ENCODE measurements at regions of chr19 and their contacts with region 1.

Region 1: GRCh38 chr19:41439441-41440222 is at the start of gene DMAC2:
- DNase-seq: peak; percentile 98
- ATAC-seq: peak; percentile 98
- total RNA-seq, gene DMAC2: 108 TPM

Region 2: DNA sequence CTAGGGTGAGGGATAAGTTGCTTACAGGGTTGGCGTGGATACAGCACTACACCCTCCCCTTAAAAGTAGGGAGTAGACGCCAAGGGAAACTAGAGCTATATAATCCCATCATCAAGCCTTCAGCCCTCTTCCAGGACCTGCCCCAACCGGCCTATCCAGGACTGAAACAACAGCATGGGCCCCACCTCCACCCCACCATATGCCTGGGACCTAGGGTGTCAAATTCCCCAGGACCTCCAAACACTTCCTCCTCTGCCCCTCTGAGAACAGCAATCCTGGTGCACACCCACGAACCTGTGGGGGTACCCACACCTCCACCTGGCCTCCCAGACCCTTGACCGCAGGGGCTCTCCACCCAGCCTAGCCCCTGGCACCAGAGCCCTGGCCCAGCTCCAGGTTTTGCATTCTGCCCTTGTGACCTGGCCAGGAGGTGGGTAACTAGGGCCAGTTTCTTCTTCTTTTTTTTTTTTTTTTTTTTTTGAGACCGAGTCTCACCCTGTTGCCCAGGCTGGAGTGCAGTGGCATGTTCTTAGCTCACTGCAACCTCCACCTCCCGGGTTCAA is 326.8 kb before region 1 on chr19:
- intact Hi-C with region 1: no loop called
- DNase-seq: no peak
- ATAC-seq: no peak

Region 3: DNA sequence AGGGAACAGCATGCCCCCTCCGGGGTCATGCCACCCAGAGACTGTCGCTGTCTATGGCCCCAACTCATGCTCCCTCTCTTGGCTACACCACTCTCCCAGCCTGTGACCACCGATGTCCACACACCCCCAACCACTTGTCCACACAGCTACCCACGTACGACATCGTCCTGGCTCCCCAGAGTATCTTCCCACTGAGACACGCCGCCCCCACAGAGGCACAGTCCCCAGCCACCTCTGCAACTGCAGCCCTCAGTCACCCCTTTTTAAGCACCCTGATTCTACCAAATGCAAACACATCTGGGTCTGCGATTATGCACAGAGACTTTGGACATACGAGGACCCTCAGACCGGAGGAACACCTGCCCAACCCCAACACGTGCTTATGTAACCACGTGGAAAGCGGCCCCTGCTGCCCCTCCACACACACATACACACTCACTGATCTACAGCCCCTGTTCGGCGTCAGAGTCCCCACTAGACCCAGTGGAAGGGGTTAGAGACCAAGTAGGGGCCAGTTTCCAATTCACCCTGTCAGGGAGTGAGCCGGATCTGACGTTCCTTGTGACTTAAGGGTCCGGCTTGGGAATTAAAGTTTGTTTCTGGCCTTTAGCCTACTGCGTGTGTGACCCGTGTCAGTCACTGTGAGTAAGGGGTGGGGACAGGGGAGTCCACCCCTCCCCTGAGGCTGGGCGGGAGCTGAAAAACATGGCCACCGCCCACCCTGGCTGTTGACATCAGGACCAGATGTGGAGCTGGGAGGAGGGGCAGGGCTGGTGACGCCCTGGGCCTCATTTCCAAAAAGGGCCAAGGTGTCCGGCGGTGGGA is 232.5 kb before region 1 on chr19:
- intact Hi-C with region 1: loop called (anchors 10 kb)
- DNase-seq: peak; percentile 91
- ATAC-seq: peak; percentile 91

Region 4: DNA sequence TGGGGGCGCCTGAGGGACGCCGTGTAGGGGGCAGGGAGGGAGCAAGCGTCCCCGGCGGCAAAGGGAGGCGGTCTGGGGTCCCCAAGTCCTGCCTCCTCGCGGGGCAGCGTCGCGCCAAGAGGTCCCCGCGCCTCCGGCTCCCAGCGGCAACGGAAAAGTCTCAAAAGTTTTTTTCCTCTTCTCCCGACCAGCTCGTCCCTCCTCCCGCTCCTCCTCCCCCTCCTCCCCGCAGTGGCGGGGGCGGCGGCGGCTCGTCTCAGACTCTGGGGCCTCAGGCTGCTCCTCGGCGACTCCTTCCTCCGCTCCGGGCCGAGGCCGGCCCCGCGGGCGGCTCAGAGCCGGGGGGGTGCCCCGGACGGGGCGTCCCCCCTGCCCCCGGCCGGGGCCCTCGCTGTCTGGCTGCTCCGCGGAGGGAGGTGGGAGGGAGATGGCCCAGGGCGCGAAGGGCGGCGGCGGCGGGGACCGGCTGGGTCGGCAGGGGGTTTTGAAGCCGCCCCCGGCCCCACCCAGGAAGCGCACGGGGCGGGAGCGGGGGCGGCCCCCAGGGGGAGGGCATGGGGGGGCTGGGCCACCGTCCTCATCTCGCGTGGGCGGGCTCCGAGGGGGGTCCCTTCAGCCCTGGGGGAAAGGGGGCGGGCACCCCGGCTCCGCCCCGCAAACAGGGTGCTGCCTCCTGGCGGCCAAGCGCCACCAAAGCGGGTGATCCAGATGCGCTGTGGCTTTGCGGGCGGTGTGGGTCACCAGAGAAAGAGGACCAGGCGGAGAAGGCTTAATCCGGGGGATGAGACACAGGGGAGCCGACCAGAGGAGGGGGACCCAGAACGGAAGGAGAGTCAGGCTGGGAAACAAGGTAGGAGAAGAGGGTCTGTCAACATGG is 85.9 kb before region 1 on chr19 and contains the start of gene TGFB1:
- intact Hi-C with region 1: no loop called
- DNase-seq: peak; percentile 96
- ATAC-seq: peak; percentile 78
- total RNA-seq, gene TGFB1: 15.0 TPM

Region 5: DNA sequence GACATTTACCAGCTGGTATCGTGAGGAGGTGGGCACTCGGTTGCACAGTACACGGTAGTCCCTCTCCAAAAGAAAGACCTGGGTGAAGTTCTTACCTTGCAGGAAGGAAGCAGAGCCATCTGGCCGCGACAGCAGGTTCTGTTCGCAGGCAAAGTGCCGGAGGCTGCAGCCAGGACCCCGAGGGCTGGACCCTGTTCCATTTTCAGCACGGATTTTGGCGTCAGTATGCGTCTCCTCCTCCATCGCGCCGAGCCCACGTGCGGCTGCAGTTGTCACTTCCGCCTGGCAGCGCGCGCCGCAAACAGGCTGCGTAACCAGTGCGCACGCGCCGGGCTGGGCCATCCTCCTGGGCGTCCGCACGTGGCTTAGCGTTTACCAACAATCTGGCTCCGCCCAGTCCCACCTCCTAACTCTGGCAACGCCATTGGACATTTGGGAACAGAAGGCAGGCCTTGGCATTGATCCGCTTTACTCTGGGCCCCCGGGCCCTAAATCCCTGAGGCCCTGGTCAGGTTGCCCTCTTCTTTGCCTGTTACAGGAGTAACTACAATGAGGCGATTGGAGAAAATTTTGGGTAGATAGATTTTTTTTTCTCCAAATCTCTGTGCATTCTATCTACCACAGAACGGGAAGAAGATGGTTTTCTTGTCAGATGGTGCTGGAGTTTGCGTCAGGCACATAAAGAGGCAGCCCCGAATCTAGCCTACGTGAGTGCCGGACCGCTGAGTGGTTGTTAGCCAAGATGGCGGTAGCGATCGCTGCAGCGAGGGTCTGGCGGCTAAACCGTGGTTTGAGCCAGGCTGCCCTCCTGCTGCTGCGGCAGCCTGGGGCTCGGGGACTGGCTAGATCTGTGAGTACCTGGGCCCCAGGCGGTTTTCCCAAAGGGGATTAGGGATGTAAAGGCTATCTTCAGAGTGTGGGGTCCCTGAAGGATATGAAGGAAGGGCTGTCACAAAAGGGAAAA is 42.3 kb before region 1 on chr19 and contains the starts of genes BCKDHA and EXOSC5:
- intact Hi-C with region 1: loop called (anchors 2 kb)
- DNase-seq: peak; percentile 99
- ATAC-seq: peak; percentile 98
- total RNA-seq, gene BCKDHA: 44.9 TPM
- total RNA-seq, gene EXOSC5: 17.1 TPM

Measured in Right ventricle myocardium inferior (tissue), 1 donor.